ENCODE measurements at regions of chr9 and their contacts with region 1.

Region 1: GRCh38 chr9:136482793-136483588 is at the start of gene SEC16A:
- DNase-seq: peak; percentile 98
- H3K4me3 ChIP-seq: peak within 1 kb of the TSS; percentile 93
- CTCF ChIP-seq: no peak

Region 2: DNA sequence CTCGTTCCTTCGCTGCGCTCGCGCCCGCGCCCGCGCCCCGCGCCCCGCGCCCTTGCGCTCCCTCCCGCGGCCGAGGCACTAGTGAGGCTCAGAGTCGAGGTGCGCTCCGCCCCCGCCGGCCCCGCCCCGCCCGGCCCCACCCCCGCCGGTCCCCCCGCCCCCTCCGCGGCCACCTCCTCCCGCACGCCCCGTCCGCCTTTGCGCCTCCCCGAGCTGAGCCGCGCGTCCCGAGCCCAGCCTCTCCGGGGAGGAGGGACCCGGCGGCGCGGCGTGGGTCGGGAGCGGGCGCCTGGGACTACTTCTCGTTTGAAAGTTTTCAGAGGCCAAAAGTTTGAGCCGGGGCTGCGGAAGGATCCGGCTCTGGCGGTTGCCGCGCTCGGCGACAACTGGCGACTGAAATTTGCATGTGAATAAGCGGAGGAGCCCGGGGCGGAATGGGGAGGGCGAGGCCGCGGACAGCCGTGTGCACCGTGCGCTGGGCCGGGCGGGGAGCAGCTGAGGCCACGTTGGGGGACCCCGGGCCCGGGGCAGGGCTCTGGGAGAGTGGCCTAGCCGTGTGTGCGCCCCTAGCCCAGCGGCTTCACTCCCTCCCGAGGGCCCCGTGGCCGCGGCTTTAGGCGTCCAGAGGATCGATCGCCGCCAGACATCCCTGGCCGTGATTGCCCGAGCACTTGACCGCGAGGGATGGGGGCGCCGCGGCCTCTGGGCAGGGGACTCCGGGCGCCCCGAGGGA is 63.1 kb after region 1 on chr9 and contains the start of gene NOTCH1:
- in situ Hi-C with region 1: loop called (anchors 10 kb)
- DNase-seq: peak; percentile 91
- H3K4me3 ChIP-seq: peak within 1 kb of the TSS; percentile 76
- CTCF ChIP-seq: no peak

Measured in astrocyte of the spinal cord (primary cell).